Mammary epithelial cell (primary cell): ENCODE measurements at regions of chr17 and their contacts with region 1.

Region 1: DNA sequence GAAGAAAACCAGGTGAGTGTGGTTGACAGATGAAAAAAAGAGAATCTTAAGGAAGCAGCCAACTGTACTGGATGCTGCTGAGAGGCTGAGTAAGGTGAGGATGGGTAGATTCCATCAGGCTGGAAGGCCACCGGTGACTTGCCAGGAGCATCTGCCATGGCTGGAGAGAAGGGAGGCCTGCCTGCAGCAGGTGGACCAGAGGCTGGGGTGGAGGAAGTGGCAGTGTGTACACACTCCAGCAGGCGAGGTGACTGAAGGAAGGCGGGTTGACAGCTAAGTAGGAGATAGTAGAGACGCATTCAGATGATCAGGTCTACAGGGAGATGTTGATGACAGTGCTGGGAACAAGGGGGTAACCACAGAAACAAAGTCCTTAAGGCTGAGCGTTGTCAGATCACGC is 69.5 kb downstream of the USP43 start:
- DNase-seq: no peak
- H3K4me3 ChIP-seq: no peak overlapping the region
- H3K27ac ChIP-seq: no peak overlapping the region
- H3K4me1 ChIP-seq: no peaks in the 10 kb centered on the region
- H3K27me3 ChIP-seq: no peaks in the 10 kb centered on the region
- CTCF ChIP-seq: no peak

Region 2: DNA sequence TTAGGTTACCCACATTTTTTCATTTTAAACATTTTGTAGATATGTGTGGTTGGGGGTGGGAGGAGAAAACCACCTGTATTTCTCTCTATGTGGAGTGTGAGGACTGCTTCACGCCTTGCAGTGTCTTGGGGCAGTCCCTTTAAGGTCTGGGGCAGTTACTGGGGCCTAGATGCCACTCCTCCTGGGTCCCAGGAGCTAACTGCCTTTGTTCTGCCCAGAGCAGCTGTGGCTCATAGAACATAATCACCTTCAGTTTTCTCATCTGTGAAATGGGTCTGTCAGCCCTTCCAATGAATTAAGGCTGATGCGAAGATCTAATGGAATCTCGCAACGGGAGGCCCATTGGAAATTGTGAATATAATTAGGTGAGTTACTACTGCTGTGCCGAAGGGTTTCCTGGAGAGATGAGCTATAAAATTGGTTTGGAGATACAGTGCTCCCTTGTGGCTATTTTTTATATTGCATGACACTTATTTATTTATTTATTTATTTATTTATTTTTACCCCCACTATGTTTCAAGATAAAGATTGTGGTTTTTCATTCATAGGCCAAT is 53.7 kb after region 1 on chr17:
- CTCF ChIA-PET with region 1: no interaction called
- dilution Hi-C with region 1: no loop called
- in situ Hi-C with region 1: loop called in 1 of 2 experiments (anchors 10 kb)
- intact Hi-C with region 1: no loop called
- DNase-seq: peak; percentile 20
- H3K4me3 ChIP-seq: no peak overlapping the region
- H3K27ac ChIP-seq: no peak overlapping the region
- H3K4me1 ChIP-seq: no peaks in the 10 kb centered on the region
- H3K27me3 ChIP-seq: no peaks in the 10 kb centered on the region
- CTCF ChIP-seq: peak; percentile 36 to 45

Region 3: DNA sequence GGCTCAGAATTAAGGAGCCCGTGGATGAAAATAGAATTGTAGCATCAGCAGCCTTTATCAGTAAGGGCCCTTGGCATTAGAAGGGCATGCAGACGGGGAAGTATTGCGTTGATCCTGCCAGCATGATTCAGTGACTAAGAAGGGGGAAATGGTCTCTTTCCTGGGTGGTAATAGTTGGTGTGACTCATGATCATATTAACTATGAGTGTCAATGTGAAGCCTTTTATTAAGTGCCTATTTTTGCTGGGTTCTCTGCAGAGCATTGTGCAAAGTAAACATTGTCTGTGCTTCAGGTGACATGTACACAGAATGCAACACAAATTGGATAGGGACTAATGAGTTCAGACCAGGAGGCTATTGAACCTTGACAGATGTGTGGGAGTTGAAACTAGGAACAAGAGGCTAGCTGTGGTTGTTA is 165.8 kb after region 1 on chr17:
- CTCF ChIA-PET with region 1: no interaction called
- dilution Hi-C with region 1: no loop called
- in situ Hi-C with region 1: no loop called
- intact Hi-C with region 1: no loop called
- DNase-seq: peak; percentile 57
- H3K4me3 ChIP-seq: no peak overlapping the region
- H3K27ac ChIP-seq: no peak overlapping the region
- H3K4me1 ChIP-seq: no peaks in the 10 kb centered on the region
- H3K27me3 ChIP-seq: no peaks in the 10 kb centered on the region
- CTCF ChIP-seq: no peak